CD4-positive, alpha-beta T cell (primary cell): ENCODE measurements at regions of chr16 and their contacts with region 1.

Region 1: DNA sequence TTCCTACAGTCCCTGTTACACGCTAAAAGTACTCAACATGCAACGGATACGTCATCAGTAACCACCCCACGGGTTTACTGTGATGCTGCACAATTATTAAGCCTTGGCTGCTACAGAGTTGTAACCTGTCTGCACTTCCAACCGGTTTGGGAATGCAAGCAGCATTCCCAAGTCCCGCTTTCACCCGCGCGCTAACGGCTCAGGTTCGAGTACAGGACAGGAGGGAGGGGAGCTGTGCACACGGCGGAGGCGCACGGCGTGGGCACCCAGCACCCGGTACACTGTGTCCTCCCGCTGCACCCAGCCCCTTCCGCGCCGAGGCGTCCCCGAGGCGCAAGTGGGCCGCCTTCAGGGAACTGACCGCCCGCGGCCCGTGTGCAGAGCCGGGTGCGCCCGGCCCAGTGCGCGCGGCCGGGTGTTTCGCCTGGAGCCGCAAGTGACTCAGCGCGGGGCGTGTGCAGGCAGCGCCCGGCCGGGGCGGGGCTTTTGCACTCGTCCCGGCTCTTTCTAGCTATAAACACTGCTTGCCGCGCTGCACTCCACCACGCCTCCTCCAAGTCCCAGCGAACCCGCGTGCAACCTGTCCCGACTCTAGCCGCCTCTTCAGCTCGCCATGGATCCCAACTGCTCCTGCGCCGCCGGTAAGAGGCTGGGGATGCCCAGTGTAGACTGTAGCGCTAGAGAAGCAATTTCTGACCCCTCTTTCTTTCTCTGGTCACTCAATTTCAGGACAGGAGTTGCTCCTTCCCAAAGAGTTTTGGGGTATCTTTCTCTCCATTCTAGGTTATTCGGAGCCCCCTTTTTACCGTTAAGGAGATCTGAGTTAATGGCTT is at the start of gene MT2A:
- DNase-seq: peak; percentile 69 to 95 (median 85)
- ATAC-seq: peak; percentile 72
- H3K4me3 ChIP-seq: peak within 1 kb of the TSS; percentile 80
- H3K4me3 Mint-ChIP-seq: peak within 1 kb of the TSS; percentile 98
- H3K27ac ChIP-seq: peak within 1 kb of the TSS; percentile 71 to 88
- H3K27ac Mint-ChIP-seq: peak within 1 kb of the TSS; percentile 96
- H3K4me1 ChIP-seq: peaks cover 50% of the 10 kb centered on the region
- H3K4me1 Mint-ChIP-seq: peaks cover 57% of the 10 kb centered on the region
- H3K27me3 ChIP-seq: no peaks in the 10 kb centered on the region
- H3K27me3 Mint-ChIP-seq: no peaks in the 10 kb centered on the region
- CTCF ChIP-seq: no peak
- total RNA-seq, gene MT2A: 47.1 to 50.8 TPM

Region 2: DNA sequence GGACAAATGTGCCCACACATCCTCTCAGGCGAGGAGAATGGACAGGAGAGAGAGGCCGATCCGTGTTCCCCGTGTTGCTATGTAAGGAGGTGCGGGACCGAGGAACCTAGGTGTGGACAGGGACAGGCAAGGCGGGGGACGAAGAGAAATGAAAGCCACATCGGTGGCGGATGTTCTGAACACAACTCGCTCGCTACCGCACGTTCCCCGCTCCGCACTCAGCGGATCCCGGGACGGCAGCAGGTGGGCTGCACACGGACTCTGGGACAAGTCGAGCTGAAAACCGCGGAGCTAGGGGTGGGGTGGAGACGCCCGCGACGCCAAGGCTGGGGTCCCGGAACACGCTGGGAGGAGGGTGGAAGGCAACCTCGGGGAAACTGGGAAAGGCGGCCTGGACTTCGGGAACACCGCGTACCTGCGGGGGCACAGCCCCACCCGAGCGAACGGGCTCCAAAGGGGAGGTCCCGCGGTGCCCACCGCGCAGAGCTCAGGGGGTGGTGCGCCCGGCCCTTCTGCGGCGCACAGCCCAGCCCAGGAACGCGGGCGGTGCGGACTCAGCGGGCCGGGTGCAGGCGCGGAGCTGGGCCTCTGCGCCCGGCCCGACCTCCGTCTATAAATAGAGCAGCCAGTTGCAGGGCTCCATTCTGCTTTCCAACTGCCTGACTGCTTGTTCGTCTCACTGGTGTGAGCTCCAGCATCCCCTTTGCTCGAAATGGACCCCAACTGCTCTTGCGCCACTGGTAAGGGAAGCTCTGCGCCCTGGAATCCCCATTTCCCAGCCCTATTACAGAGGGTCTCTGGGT is 17.1 kb after region 1 on chr16 and contains the start of gene MT1E:
- CTCF ChIA-PET with region 1: no interaction called
- POLR2A ChIA-PET with region 1: interaction called, 9 read pairs
- intact Hi-C with region 1: loop called in 1 of 2 experiments (anchors 2 kb)
- DNase-seq: peak in 11 of 14 experiments; percentile 11 to 80 (median 38)
- ATAC-seq: peak; percentile 86
- H3K4me3 ChIP-seq: peak within 1 kb of the TSS; percentile 73
- H3K4me3 Mint-ChIP-seq: peak within 1 kb of the TSS; percentile 89
- H3K27ac ChIP-seq: no peak within 1 kb of the TSS
- H3K27ac Mint-ChIP-seq: no peak within 1 kb of the TSS
- H3K4me1 ChIP-seq: peaks cover 20% of the 10 kb centered on the region
- H3K4me1 Mint-ChIP-seq: peaks cover 11% of the 10 kb centered on the region
- H3K27me3 ChIP-seq: peaks cover 0 to 10% of the 10 kb centered on the region in 2 experiments
- H3K27me3 Mint-ChIP-seq: peaks cover 42% of the 10 kb centered on the region
- CTCF ChIP-seq: no peak
- total RNA-seq, gene MT1E: 2.5 to 2.9 TPM

Region 3: DNA sequence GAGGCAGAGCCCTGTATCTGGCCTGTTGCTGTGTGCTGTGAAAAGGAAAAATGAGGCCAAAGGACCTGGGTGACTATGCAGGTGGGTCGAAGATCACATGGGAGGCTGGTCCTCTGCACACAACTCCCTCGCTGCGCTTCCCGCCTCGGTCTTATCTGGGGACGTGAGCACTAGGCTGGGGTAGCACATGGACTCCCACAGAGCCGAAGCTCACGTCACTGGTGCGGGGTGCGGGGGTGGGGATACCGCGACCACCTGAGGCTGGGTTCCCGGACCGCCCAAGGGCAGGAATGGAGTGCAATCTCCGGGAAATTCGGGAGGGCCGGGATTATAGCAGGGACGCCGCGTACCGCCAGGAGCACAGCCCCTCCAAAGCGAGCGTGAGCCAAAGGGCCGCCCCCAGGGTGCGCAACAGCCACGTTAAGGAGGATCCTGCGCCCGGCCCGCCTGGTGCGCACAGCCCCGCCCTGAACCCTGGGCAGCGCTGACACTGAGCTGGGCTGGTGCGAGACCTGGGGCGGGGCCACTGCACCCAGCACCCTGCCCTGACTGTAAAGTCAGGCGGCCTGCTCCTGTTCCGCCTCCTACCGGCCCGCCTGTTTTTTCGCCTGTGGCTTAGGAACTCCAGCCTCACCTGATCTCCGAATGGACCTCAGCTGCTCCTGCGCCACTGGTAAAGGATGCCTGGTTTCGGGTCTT is 35.0 kb after region 1 on chr16:
- CTCF ChIA-PET with region 1: interaction called, 6 read pairs
- POLR2A ChIA-PET with region 1: interaction called, 26 read pairs
- intact Hi-C with region 1: loop called in 1 of 2 experiments (anchors 1 kb)
- DNase-seq: peak; percentile 48 to 90 (median 70)
- ATAC-seq: peak; percentile 99
- H3K4me3 ChIP-seq: peak overlapping the region; percentile 46
- H3K4me3 Mint-ChIP-seq: peak overlapping the region; percentile 74
- H3K27ac ChIP-seq: no peak overlapping the region
- H3K27ac Mint-ChIP-seq: no peak overlapping the region
- H3K4me1 ChIP-seq: peaks cover 25% of the 10 kb centered on the region
- H3K4me1 Mint-ChIP-seq: peaks cover 25% of the 10 kb centered on the region
- H3K27me3 ChIP-seq: peaks cover 19 to 26% of the 10 kb centered on the region in 2 experiments
- H3K27me3 Mint-ChIP-seq: peaks cover 43% of the 10 kb centered on the region
- CTCF ChIP-seq: peak; percentile 46

Region 4: DNA sequence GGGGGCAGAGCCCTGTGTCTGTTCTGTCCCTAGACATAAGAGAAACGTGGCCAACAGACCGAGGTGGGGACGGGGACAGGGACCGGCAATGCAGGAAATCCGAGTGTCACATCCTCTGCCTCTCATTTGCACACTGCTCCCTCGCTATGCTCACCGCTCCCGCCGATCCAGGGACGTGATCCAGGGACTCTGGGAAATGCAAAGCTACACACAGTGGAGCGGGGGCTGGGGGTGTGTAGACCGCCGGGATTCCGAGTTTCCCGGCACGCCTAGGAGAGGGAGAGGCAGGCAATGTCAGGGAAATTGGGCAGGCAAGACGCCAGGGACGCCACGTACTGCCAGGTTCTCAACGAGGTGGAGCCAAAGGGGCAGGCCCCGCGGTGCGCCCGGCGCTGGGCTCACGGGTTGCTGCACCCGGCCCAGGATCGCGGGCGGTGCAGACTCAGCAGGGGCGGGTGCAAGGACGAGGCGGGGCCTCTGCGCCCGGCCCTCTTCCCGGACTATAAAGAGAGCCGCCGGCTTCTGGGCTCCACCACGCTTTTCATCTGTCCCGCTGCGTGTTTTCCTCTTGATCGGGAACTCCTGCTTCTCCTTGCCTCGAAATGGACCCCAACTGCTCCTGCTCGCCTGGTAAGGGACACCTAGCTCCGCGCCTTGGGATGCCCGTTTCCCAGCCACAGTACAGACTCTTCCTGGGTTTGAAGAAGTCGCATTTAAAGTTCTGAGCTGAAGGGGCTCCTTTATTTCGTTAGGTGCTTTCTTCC is 73.9 kb after region 1 on chr16 and contains the start of gene MT1X:
- CTCF ChIA-PET with region 1: no interaction called
- POLR2A ChIA-PET with region 1: interaction called, 20 read pairs
- intact Hi-C with region 1: loop called (anchors 1 kb)
- DNase-seq: peak; percentile 72 to 94 (median 86)
- ATAC-seq: peak; percentile 99
- H3K4me3 ChIP-seq: peak within 1 kb of the TSS; percentile 83
- H3K4me3 Mint-ChIP-seq: peak within 1 kb of the TSS; percentile 96
- H3K27ac ChIP-seq: peak within 1 kb of the TSS; percentile 50 to 71
- H3K27ac Mint-ChIP-seq: peak within 1 kb of the TSS; percentile 93
- H3K4me1 ChIP-seq: peaks cover 28% of the 10 kb centered on the region
- H3K4me1 Mint-ChIP-seq: peaks cover 27% of the 10 kb centered on the region
- H3K27me3 ChIP-seq: no peaks in the 10 kb centered on the region
- H3K27me3 Mint-ChIP-seq: no peaks in the 10 kb centered on the region
- CTCF ChIP-seq: no peak
- total RNA-seq, gene MT1X: 10.9 to 14.1 TPM

Region 5: GRCh38 chr16:56708525-56709442 is 100.5 kb after region 1 on chr16:
- CTCF ChIA-PET with region 1: no interaction called
- POLR2A ChIA-PET with region 1: interaction called, 12 read pairs
- intact Hi-C with region 1: no loop called
- DNase-seq: peak in 13 of 14 experiments; percentile 10 to 63 (median 41)
- ATAC-seq: peak; percentile 90
- H3K4me3 ChIP-seq: peak overlapping the region; percentile 35
- H3K4me3 Mint-ChIP-seq: peak overlapping the region; percentile 83
- H3K27ac ChIP-seq: peak overlapping the region in 1 of 2 donors; percentile 50
- H3K27ac Mint-ChIP-seq: peak overlapping the region; percentile 92
- H3K4me1 ChIP-seq: peaks cover 26% of the 10 kb centered on the region
- H3K4me1 Mint-ChIP-seq: peaks cover 28% of the 10 kb centered on the region
- H3K27me3 ChIP-seq: no peaks in the 10 kb centered on the region
- H3K27me3 Mint-ChIP-seq: no peaks in the 10 kb centered on the region
- CTCF ChIP-seq: no peak